ENCODE measurements at regions of chr4 and their contacts with region 1.

Region 1: GRCh38 chr4:76087007-76087769 is 12.7 kb downstream of the ART3 start:
- DNase-seq: peak; percentile 83
- H3K4me3 Mint-ChIP-seq: no peak overlapping the region
- H3K27ac Mint-ChIP-seq: peak overlapping the region; percentile 42
- H3K4me1 Mint-ChIP-seq: peaks cover 21% of the 10 kb centered on the region
- H3K27me3 Mint-ChIP-seq: no peaks in the 10 kb centered on the region
- CTCF ChIP-seq: peak; percentile 35

Region 2: GRCh38 chr4:75916091-75916661 is 171.0 kb before region 1 on chr4:
- CTCF ChIA-PET with region 1: interaction called, 11 read pairs
- POLR2A ChIA-PET with region 1: no interaction called
- intact Hi-C with region 1: no loop called
- DNase-seq: peak; percentile 35
- H3K4me3 Mint-ChIP-seq: no peak overlapping the region
- H3K27ac Mint-ChIP-seq: peak overlapping the region; percentile 31
- H3K4me1 Mint-ChIP-seq: no peaks in the 10 kb centered on the region
- H3K27me3 Mint-ChIP-seq: no peaks in the 10 kb centered on the region
- CTCF ChIP-seq: peak; percentile 79

Region 3: DNA sequence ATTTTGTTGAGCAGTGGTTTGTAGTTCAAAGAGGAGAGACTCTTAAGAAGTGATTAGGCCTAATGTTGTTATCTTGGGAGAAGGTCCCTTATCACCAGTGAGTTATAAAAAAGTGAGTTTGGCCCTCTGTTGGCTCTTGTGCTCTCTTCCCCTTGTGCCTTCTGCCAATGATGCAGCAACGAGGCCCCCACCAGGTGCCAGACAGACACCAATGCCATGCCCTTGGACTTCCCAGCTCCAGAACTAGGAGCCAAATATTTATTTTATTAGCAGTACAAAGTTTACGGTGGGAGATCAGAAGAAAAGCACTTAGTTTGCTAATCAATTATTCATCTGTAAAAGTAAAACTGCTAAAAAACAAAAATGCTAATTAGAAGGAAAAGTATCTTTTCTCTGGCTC is 123.6 kb before region 1 on chr4:
- CTCF ChIA-PET with region 1: no interaction called
- POLR2A ChIA-PET with region 1: no interaction called
- intact Hi-C with region 1: no loop called
- DNase-seq: no peak
- H3K4me3 Mint-ChIP-seq: no peak overlapping the region
- H3K27ac Mint-ChIP-seq: no peak overlapping the region
- H3K4me1 Mint-ChIP-seq: no peaks in the 10 kb centered on the region
- H3K27me3 Mint-ChIP-seq: no peaks in the 10 kb centered on the region
- CTCF ChIP-seq: no peak

Region 4: GRCh38 chr4:75995727-75996126 is 91.5 kb before region 1 on chr4:
- CTCF ChIA-PET with region 1: interaction called, 128 read pairs
- POLR2A ChIA-PET with region 1: interaction called, 12 read pairs
- intact Hi-C with region 1: loop called (anchors 1 kb)
- DNase-seq: peak; percentile 66
- H3K4me3 Mint-ChIP-seq: no peak overlapping the region
- H3K27ac Mint-ChIP-seq: peak overlapping the region; percentile 76
- H3K4me1 Mint-ChIP-seq: peaks cover 9% of the 10 kb centered on the region
- H3K27me3 Mint-ChIP-seq: peaks cover 12% of the 10 kb centered on the region
- CTCF ChIP-seq: peak; percentile 60

Region 5: GRCh38 chr4:76067652-76068286 is 19.4 kb before region 1 on chr4:
- CTCF ChIA-PET with region 1: interaction called, 24 read pairs
- POLR2A ChIA-PET with region 1: interaction called, 4 read pairs
- intact Hi-C with region 1: loop called (anchors 2 kb)
- DNase-seq: peak; percentile 83
- H3K4me3 Mint-ChIP-seq: no peak overlapping the region
- H3K27ac Mint-ChIP-seq: no peak overlapping the region
- H3K4me1 Mint-ChIP-seq: no peaks in the 10 kb centered on the region
- H3K27me3 Mint-ChIP-seq: no peaks in the 10 kb centered on the region
- CTCF ChIP-seq: peak; percentile 65

Region 6: GRCh38 chr4:76105652-76106051 is 18.5 kb after region 1 on chr4:
- CTCF ChIA-PET with region 1: interaction called, 13 read pairs
- POLR2A ChIA-PET with region 1: interaction called, 14 read pairs
- intact Hi-C with region 1: no loop called
- DNase-seq: no peak
- H3K4me3 Mint-ChIP-seq: no peak overlapping the region
- H3K27ac Mint-ChIP-seq: no peak overlapping the region
- H3K4me1 Mint-ChIP-seq: no peaks in the 10 kb centered on the region
- H3K27me3 Mint-ChIP-seq: no peaks in the 10 kb centered on the region
- CTCF ChIP-seq: no peak

Region 7: DNA sequence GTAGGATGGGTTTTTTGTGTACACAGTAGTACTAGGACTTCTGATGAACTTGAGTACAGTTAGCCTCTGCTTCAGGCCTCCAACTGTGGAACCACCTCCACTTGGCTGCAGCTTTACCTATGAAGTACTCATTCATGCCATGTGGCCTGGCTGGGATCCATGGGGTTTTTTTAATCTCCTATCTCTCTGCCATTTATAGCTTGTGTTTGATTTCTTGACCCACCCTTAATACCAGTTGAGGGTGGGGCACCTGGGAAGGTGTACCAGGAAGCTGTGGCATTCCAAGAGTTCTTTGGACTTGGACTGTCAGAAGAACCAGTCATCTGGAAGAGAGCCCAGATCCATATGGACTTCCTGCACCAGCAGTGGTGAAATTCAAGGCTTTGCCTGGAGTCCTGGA is 578.0 kb after region 1 on chr4:
- CTCF ChIA-PET with region 1: no interaction called
- POLR2A ChIA-PET with region 1: no interaction called
- intact Hi-C with region 1: no loop called
- DNase-seq: peak; percentile 92
- H3K4me3 Mint-ChIP-seq: no peak overlapping the region
- H3K27ac Mint-ChIP-seq: peak overlapping the region; percentile 93
- H3K4me1 Mint-ChIP-seq: peaks cover 19% of the 10 kb centered on the region
- H3K27me3 Mint-ChIP-seq: no peaks in the 10 kb centered on the region
- CTCF ChIP-seq: no peak

Measured in MCF 10A (cell line).